A673 (cell line): ENCODE measurements at regions of chr3 and their contacts with region 1.

Region 1: DNA sequence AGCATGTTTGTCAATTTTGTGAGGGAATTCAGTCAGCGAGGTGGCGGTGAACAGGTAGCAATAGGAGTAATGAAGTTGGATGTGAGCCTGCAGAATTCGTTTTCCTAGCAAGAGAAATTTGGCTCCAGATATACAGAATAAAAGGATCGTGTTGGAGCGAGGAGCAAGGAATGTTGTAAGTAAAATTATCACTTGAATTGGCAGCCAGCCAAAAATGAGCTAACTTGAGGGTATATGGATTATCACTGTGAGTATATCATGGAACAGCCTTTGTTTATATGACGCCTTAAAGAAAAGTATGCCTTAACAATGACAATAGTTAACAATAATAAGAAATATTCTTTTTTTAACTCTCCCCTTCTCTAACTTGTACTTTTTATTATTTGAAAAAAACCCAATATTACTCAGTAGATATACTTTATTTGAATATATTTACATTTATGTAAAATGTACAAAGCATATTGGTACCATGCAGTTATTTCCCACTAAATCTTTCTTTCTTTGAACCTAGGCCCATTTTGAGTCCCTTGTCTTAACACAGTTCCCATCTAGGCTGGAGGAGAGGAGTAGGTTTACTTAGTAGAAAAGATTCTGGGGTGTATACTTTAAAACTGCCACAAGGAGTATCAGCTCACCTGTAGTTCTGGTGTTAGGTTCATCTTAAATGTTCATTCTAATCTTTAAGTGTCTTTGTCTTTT is 29.3 kb downstream of the EPHA6 start:
- DNase-seq: peak; percentile 1
- H3K4me3 ChIP-seq: no peak overlapping the region
- H3K27ac ChIP-seq: no peak overlapping the region
- H3K4me1 ChIP-seq: no peaks in the 10 kb centered on the region
- H3K27me3 ChIP-seq: no peaks in the 10 kb centered on the region
- CTCF ChIP-seq: no peak

Region 2: GRCh38 chr3:96779810-96780209 is 63.8 kb before region 1 on chr3:
- CTCF ChIA-PET with region 1: no interaction called
- POLR2A ChIA-PET with region 1: no interaction called
- intact Hi-C with region 1: loop called (anchors 10 kb)
- DNase-seq: no peak
- H3K4me3 ChIP-seq: no peak overlapping the region
- H3K27ac ChIP-seq: no peak overlapping the region
- H3K4me1 ChIP-seq: no peaks in the 10 kb centered on the region
- H3K27me3 ChIP-seq: no peaks in the 10 kb centered on the region
- CTCF ChIP-seq: no peak